WTC11 (cell line): ENCODE measurements at regions of chr1 and their contacts with region 1.

Region 1: GRCh38 chr1:154760469-154760933 is 109.6 kb downstream of the KCNN3 start:
- DNase-seq: peak; percentile 87
- ATAC-seq: peak; percentile 96
- H3K4me3 Mint-ChIP-seq: peak overlapping the region; percentile 48
- H3K27ac Mint-ChIP-seq: no peak overlapping the region
- H3K4me1 Mint-ChIP-seq: no peaks in the 10 kb centered on the region
- H3K27me3 Mint-ChIP-seq: peaks cover 24% of the 10 kb centered on the region
- CTCF ChIP-seq: peak; percentile 66

Region 2: GRCh38 chr1:154558575-154559465 is 201.7 kb before region 1 on chr1 and contains the start of gene UBE2Q1:
- CTCF ChIA-PET with region 1: interaction called, 15 read pairs
- POLR2A ChIA-PET with region 1: no interaction called
- DNase-seq: peak; percentile 95
- ATAC-seq: peak; percentile 70
- H3K4me3 Mint-ChIP-seq: peak within 1 kb of the TSS; percentile 94
- H3K27ac Mint-ChIP-seq: peak within 1 kb of the TSS; percentile 89
- H3K4me1 Mint-ChIP-seq: peaks cover 28% of the 10 kb centered on the region
- H3K27me3 Mint-ChIP-seq: no peaks in the 10 kb centered on the region
- CTCF ChIP-seq: no peak
- total RNA-seq, gene UBE2Q1: 60.8 to 62.7 TPM (median 61.6 TPM) in 3 replicates

Region 3: GRCh38 chr1:154669464-154670282 is 90.8 kb before region 1 on chr1:
- CTCF ChIA-PET with region 1: interaction called, 16 read pairs
- POLR2A ChIA-PET with region 1: no interaction called
- DNase-seq: peak; percentile 80
- ATAC-seq: peak; percentile 100
- H3K4me3 Mint-ChIP-seq: no peak overlapping the region
- H3K27ac Mint-ChIP-seq: no peak overlapping the region
- H3K4me1 Mint-ChIP-seq: peaks cover 26% of the 10 kb centered on the region
- H3K27me3 Mint-ChIP-seq: peaks cover 2% of the 10 kb centered on the region; the same call in 1 of the 2 replicates
- CTCF ChIP-seq: no peak

Region 4: GRCh38 chr1:154749078-154749760 is 11.3 kb before region 1 on chr1:
- CTCF ChIA-PET with region 1: interaction called, 14 read pairs
- POLR2A ChIA-PET with region 1: no interaction called
- DNase-seq: no peak
- ATAC-seq: no peak
- H3K4me3 Mint-ChIP-seq: no peak overlapping the region
- H3K27ac Mint-ChIP-seq: peak overlapping the region; percentile 55; the same call in 1 of the 2 replicates
- H3K4me1 Mint-ChIP-seq: peaks cover 48% of the 10 kb centered on the region
- H3K27me3 Mint-ChIP-seq: no peaks in the 10 kb centered on the region; the same call in 1 of the 2 replicates
- CTCF ChIP-seq: no peak